Ascending aorta (tissue), 2 donors: ENCODE measurements at regions of chr9 and their contacts with region 1.

Region 1: GRCh38 chr9:13033959-13034693 is 245.4 kb downstream of the MPDZ start:
- DNase-seq: peak in 1 of 2 donors; percentile 77
- H3K4me3 ChIP-seq: peak overlapping the region in 1 of 2 donors; percentile 55
- H3K27ac ChIP-seq: no peak overlapping the region
- H3K4me1 ChIP-seq: no peaks in the 10 kb centered on the region
- H3K27me3 ChIP-seq: no peaks in the 10 kb centered on the region
- CTCF ChIP-seq: peak; percentile 67 to 77 (median 67)

Region 2: GRCh38 chr9:13088720-13089427 is 54.7 kb after region 1 on chr9:
- intact Hi-C with region 1: loop called (anchors 2 kb)
- DNase-seq: no peak
- H3K4me3 ChIP-seq: peak overlapping the region in 1 of 2 donors; percentile 31
- H3K27ac ChIP-seq: no peak overlapping the region
- H3K4me1 ChIP-seq: peaks cover 0 to 7% of the 10 kb centered on the region in 2 donors
- H3K27me3 ChIP-seq: no peaks in the 10 kb centered on the region
- CTCF ChIP-seq: peak; percentile 17 to 67 (median 63)

Region 3: DNA sequence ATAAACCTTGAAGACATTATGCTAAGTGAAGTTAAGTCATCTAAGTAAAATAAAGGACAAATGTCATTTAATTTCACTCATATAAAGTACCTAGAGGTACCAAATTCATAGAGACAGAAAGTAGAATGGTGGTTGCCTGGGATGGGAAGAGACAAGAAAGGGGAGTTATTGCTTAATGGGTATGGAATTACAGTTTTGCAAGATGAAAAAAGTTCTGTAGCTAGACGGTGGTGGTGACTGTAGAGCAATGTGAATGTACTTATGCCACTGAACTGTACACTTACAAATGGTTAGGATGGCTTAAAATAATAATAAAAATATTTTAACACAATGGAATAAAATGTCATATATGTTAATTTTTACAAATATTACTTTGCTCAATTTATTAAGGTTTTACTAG is 117.4 kb after region 1 on chr9:
- intact Hi-C with region 1: loop called (anchors 10 kb)
- DNase-seq: no peak
- H3K4me3 ChIP-seq: no peak overlapping the region
- H3K27ac ChIP-seq: no peak overlapping the region
- H3K4me1 ChIP-seq: no peaks in the 10 kb centered on the region
- H3K27me3 ChIP-seq: no peaks in the 10 kb centered on the region
- CTCF ChIP-seq: no peak

Region 4: DNA sequence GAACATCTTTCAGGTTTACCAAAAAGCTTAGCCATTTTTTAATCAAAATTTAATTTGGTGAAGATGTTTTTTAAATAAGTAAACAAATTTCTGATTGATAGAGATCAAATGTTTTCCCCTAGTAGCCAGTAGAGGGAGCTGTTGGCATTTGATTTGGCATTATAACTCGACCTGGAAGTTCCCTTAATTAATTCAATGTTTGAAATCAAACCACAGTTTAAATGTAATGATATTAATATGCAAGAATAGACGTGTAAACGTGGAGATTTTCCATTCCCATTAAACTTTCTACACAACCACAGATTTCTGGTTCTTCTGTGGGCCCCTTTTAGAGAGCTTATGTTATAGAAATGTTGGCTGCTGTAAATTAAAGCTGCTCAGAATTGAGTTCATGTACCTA is 393.5 kb after region 1 on chr9:
- intact Hi-C with region 1: loop called (anchors 5 kb)
- DNase-seq: no peak
- H3K4me3 ChIP-seq: no peak overlapping the region
- H3K27ac ChIP-seq: no peak overlapping the region
- H3K4me1 ChIP-seq: no peaks in the 10 kb centered on the region
- H3K27me3 ChIP-seq: no peaks in the 10 kb centered on the region
- CTCF ChIP-seq: peak; percentile 52 to 79 (median 68)

Region 5: DNA sequence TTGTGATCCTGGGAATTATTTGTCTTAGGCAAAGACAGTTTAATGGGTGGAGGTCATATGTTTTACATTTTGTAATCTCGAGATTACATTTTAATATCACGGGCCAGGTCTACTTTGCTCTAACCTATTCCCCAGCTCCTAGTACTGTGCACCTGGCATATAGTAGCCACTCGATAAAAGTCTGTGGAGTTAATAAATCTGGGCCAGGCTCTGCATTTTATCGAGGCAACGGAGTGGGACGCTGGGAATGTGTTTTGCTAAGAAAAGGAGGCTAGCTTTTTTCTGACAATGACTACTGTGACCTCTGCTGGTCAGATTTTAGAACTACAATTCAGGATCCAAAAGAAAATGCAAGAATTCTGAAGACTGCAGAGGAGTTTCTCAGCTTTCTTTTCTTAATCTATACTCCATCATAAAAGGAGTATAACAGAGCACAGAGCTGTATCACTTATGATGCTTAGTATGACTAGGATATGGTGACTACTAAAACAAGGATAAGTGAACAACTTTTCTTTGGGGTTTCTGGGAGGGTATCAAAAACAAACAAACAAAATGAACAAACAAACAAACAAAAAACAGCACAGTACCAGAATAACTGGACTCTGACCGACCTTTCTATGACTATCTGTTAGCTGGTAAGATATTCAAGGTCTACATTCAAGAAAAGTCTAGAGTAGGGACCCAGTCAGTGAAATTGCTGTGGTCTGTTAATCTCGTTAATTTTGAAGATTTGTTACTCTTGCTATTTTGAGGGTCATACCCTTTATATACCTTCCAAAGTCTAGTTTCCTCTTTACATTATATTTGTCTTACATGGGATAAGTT is 1734.5 kb after region 1 on chr9:
- intact Hi-C with region 1: loop called (anchors 10 kb)
- DNase-seq: no peak
- H3K4me3 ChIP-seq: peak overlapping the region in 1 of 2 donors; percentile 16
- H3K27ac ChIP-seq: no peak overlapping the region
- H3K4me1 ChIP-seq: no peaks in the 10 kb centered on the region
- H3K27me3 ChIP-seq: no peaks in the 10 kb centered on the region
- CTCF ChIP-seq: peak; percentile 43 to 82 (median 64)